ENCODE measurements at regions of chr11 and their contacts with region 1.

Region 1: GRCh38 chr11:82216927-82217570 is 516.6 kb downstream of the FAM181B start:
- DNase-seq: no peak
- ATAC-seq: no peak
- H3K4me3 ChIP-seq: no peak overlapping the region
- H3K27ac ChIP-seq: no peak overlapping the region
- H3K4me1 ChIP-seq: no peaks in the 10 kb centered on the region
- H3K27me3 ChIP-seq: no peaks in the 10 kb centered on the region
- CTCF ChIP-seq: no peak

Region 2: GRCh38 chr11:81979448-81979847 is 237.6 kb before region 1 on chr11:
- CTCF ChIA-PET with region 1: no interaction called
- POLR2A ChIA-PET with region 1: no interaction called
- in situ Hi-C with region 1: no loop called
- intact Hi-C with region 1: loop called (anchors 10 kb)
- DNase-seq: no peak
- ATAC-seq: no peak
- H3K4me3 ChIP-seq: no peak overlapping the region
- H3K27ac ChIP-seq: no peak overlapping the region
- H3K4me1 ChIP-seq: no peaks in the 10 kb centered on the region
- H3K27me3 ChIP-seq: no peaks in the 10 kb centered on the region
- CTCF ChIP-seq: no peak

Region 3: GRCh38 chr11:82003671-82004515 is 213.2 kb before region 1 on chr11:
- CTCF ChIA-PET with region 1: no interaction called
- POLR2A ChIA-PET with region 1: no interaction called
- in situ Hi-C with region 1: no loop called
- intact Hi-C with region 1: no loop called
- DNase-seq: no peak
- ATAC-seq: no peak
- H3K4me3 ChIP-seq: no peak overlapping the region
- H3K27ac ChIP-seq: no peak overlapping the region
- H3K4me1 ChIP-seq: no peaks in the 10 kb centered on the region
- H3K27me3 ChIP-seq: no peaks in the 10 kb centered on the region
- CTCF ChIP-seq: no peak

Region 4: GRCh38 chr11:82059505-82059904 is 157.5 kb before region 1 on chr11:
- CTCF ChIA-PET with region 1: no interaction called
- POLR2A ChIA-PET with region 1: no interaction called
- in situ Hi-C with region 1: no loop called
- intact Hi-C with region 1: no loop called
- DNase-seq: no peak
- ATAC-seq: no peak
- H3K4me3 ChIP-seq: no peak overlapping the region
- H3K27ac ChIP-seq: no peak overlapping the region
- H3K4me1 ChIP-seq: no peaks in the 10 kb centered on the region
- H3K27me3 ChIP-seq: no peaks in the 10 kb centered on the region
- CTCF ChIP-seq: no peak